GM12878 (cell line): ENCODE measurements at regions of chr12 and their contacts with region 1.

Region 1: GRCh38 chr12:69639400-69640016 is 28.8 kb upstream of the LRRC10 start:
- DNase-seq: peak; percentile 15
- ATAC-seq: peak; percentile 96
- H3K4me3 ChIP-seq: no peak overlapping the region
- H3K27ac ChIP-seq: no peak overlapping the region
- H3K4me1 ChIP-seq: no peaks in the 10 kb centered on the region
- H3K27me3 ChIP-seq: no peaks in the 10 kb centered on the region
- CTCF ChIP-seq: peak; percentile 82 to 90 (median 87)
- EP300 ChIP-seq: no peak
- POLR2A ChIP-seq: no peak
- RAD21 ChIP-seq: peak; percentile 63

Region 2: DNA sequence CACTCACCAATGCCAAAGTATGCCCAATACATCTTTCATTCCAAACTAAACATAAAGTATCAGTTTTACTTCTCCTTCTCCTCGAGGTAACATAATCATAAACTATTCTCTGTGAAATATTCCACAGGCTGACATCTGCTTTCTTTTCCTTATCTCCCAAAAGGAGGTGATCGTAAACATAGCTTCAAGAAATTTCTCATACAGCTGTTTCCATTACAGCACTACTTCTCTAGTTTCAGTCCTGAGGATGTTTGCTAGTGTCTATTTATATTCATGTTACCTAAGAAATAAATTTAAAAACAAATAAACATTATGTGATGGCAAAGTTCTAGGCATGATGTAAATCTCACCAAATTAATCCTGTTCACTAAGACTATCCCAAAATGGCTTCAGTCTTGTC is 490.2 kb before region 1 on chr12:
- CTCF ChIA-PET with region 1: interaction called, 19 read pairs
- POLR2A ChIA-PET with region 1: no interaction called
- RAD21 ChIA-PET with region 1: no interaction called
- SMC1A ChIA-PET with region 1: no interaction called
- in situ Hi-C with region 1: loop called (anchors 10 kb)
- intact Hi-C with region 1: loop called (anchors 2 kb)
- DNase-seq: no peak
- ATAC-seq: no peak
- H3K4me3 ChIP-seq: no peak overlapping the region
- H3K27ac ChIP-seq: no peak overlapping the region
- H3K4me1 ChIP-seq: no peaks in the 10 kb centered on the region
- H3K27me3 ChIP-seq: no peaks in the 10 kb centered on the region
- CTCF ChIP-seq: no peak
- EP300 ChIP-seq: no peak
- POLR2A ChIP-seq: no peak
- RAD21 ChIP-seq: no peak

Region 3: GRCh38 chr12:69290545-69291277 is 348.8 kb before region 1 on chr12:
- CTCF ChIA-PET with region 1: interaction called, 22 read pairs
- POLR2A ChIA-PET with region 1: no interaction called
- RAD21 ChIA-PET with region 1: no interaction called
- SMC1A ChIA-PET with region 1: interaction called, 3 read pairs
- in situ Hi-C with region 1: no loop called
- intact Hi-C with region 1: loop called (anchors 1 kb)
- DNase-seq: peak; percentile 32
- ATAC-seq: peak; percentile 100
- H3K4me3 ChIP-seq: no peak overlapping the region
- H3K27ac ChIP-seq: no peak overlapping the region
- H3K4me1 ChIP-seq: no peaks in the 10 kb centered on the region
- H3K27me3 ChIP-seq: no peaks in the 10 kb centered on the region
- CTCF ChIP-seq: peak; percentile 97 to 99 (median 99); a peak in 5 of 6 replicates
- EP300 ChIP-seq: no peak
- POLR2A ChIP-seq: no peak
- RAD21 ChIP-seq: peak; percentile 96

Region 4: GRCh38 chr12:69354556-69355187 is 284.8 kb before region 1 on chr12:
- CTCF ChIA-PET with region 1: interaction called, 93 read pairs
- POLR2A ChIA-PET with region 1: interaction called, 3 read pairs
- RAD21 ChIA-PET with region 1: interaction called, 44 read pairs
- SMC1A ChIA-PET with region 1: interaction called, 41 read pairs
- in situ Hi-C with region 1: loop called (anchors 5 kb)
- intact Hi-C with region 1: loop called (anchors 1 kb)
- DNase-seq: no peak
- ATAC-seq: no peak
- H3K4me3 ChIP-seq: no peak overlapping the region
- H3K27ac ChIP-seq: no peak overlapping the region
- H3K4me1 ChIP-seq: no peaks in the 10 kb centered on the region; the same call in 1 of the 2 replicates
- H3K27me3 ChIP-seq: no peaks in the 10 kb centered on the region
- CTCF ChIP-seq: no peak
- EP300 ChIP-seq: no peak
- POLR2A ChIP-seq: no peak
- RAD21 ChIP-seq: no peak

Region 5: GRCh38 chr12:69388371-69388770 is 251.1 kb before region 1 on chr12:
- CTCF ChIA-PET with region 1: interaction called, 12 read pairs
- POLR2A ChIA-PET with region 1: no interaction called
- RAD21 ChIA-PET with region 1: no interaction called
- SMC1A ChIA-PET with region 1: interaction called, 8 read pairs
- in situ Hi-C with region 1: no loop called
- intact Hi-C with region 1: no loop called
- DNase-seq: no peak
- ATAC-seq: peak; percentile 60
- H3K4me3 ChIP-seq: no peak overlapping the region
- H3K27ac ChIP-seq: no peak overlapping the region
- H3K4me1 ChIP-seq: no peaks in the 10 kb centered on the region
- H3K27me3 ChIP-seq: no peaks in the 10 kb centered on the region
- CTCF ChIP-seq: peak; percentile 18 to 55 (median 54); a peak in 3 of 6 replicates
- EP300 ChIP-seq: no peak
- POLR2A ChIP-seq: no peak
- RAD21 ChIP-seq: peak; percentile 61

Region 6: GRCh38 chr12:69425412-69425811 is 214.1 kb before region 1 on chr12:
- CTCF ChIA-PET with region 1: no interaction called
- POLR2A ChIA-PET with region 1: no interaction called
- RAD21 ChIA-PET with region 1: no interaction called
- SMC1A ChIA-PET with region 1: no interaction called
- in situ Hi-C with region 1: no loop called
- intact Hi-C with region 1: no loop called
- DNase-seq: no peak
- ATAC-seq: no peak
- H3K4me3 ChIP-seq: no peak overlapping the region
- H3K27ac ChIP-seq: no peak overlapping the region
- H3K4me1 ChIP-seq: no peaks in the 10 kb centered on the region
- H3K27me3 ChIP-seq: no peaks in the 10 kb centered on the region
- CTCF ChIP-seq: no peak
- EP300 ChIP-seq: no peak
- POLR2A ChIP-seq: no peak
- RAD21 ChIP-seq: no peak